Posterior vena cava (tissue), 2 donors: ENCODE measurements at regions of chr6 and their contacts with region 1.

Region 1: DNA sequence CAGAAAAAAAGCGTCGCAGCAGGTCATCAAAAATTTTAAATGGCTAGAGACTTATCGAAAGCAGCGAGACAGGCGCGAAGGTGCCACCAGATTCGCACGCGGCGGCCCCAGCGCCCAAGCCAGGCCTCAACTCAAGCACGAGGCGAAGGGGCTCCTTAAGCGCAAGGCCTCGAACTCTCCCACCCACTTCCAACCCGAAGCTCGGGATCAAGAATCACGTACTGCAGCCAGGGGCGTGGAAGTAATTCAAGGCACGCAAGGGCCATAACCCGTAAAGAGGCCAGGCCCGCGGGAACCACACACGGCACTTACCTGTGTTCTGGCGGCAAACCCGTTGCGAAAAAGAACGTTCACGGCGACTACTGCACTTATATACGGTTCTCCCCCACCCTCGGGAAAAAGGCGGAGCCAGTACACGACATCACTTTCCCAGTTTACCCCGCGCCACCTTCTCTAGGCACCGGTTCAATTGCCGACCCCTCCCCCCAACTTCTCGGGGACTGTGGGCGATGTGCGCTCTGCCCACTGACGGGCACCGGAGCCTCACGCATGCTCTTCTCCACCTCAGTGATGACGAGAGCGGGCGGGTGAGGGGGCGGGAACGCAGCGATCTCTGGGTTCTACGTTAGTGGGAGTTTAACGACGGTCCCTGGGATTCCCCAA is at the start of gene EEF1A1:
- DNase-seq: peak; percentile 100
- total RNA-seq, gene EEF1A1: 7,949 to 8,333 TPM

Region 2: DNA sequence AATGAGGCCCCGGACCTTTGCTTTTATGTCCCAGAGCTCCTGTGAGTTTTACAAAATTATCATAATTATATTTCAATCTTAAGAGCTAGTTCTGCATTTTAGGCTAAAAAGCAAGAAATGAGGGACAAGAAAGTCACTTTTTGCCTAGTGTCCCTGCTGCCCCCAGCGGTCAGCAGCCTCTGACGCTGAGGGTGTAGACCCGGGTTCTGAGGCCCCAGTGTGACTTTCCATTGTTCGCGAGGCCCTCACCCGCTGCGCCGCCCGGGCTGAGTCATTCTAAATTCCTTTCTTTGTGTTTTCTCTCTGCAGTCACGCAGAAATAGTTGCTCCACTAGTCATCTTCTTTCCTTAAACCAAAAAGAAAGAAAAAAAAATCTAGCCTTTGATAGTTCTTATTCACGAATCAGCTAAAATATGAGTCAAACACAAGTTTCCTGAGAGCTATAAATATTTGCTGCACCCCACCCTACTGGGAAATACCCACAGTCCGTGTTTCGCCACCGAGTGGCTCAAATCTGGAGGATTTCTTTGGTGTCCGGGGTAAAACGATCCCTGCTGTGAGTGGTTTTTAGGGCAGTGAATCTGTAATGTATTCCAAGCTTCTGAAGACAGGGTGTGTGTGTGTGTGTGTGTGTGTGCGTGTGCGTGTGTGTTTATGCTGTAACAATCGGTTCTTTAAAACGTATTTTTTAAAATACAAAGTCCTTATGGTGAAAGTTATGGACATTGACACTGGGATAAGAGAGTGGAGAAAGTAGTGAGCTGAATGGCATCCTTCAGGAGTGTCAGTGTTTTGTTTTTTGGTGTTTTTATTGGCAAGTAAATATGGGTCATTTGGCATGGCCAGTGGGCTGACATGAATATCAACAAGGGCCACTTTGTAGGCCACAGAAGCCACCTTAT is 59.7 kb after region 1 on chr6:
- intact Hi-C with region 1: loop called (anchors 2 to 5 kb)
- DNase-seq: peak; percentile 95

Region 3: GRCh38 chr6:73604020-73604419 is 83.2 kb after region 1 on chr6:
- intact Hi-C with region 1: no loop called
- DNase-seq: no peak